Psoas muscle (tissue), 8 donors: ENCODE measurements at regions of chr1 and their contacts with region 1.

Region 1: DNA sequence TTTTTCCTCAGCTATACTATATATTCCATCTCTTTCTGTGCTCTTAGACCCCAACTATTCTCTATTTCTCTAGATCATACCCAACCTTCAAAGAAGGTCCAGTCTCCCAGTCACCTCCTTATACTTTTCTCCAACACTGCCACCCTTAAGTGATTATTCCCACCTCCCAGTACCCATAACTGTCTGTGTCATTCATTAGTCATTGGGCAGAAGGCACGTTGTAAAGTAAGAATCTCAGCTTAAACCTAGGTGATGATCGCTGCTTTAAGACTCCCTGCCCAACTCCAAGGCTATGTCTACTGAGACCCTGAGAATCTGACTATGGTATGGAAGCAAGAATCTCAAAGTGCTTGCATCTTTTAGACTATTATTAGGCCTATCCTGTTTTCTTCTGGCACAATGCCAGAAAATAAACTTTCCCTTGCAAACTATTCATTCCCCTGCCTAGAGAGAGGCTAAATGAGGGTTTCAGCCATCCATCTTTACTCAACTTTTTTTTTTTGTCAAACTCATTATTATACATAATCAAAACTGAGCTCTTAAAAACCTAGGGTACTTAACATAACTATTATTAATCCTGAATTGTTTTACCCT is 174.3 kb upstream of the DPT start:
- DNase-seq: no peak
- ATAC-seq: peak in 1 of 4 donors; percentile 23
- H3K4me3 ChIP-seq: no peak overlapping the region
- H3K27ac ChIP-seq: no peak overlapping the region
- H3K4me1 ChIP-seq: peaks cover 5% of the 10 kb centered on the region
- H3K27me3 ChIP-seq: no peaks in the 10 kb centered on the region
- CTCF ChIP-seq: no peak

Region 2: GRCh38 chr1:168728473-168729404 is 174.6 kb before region 1 on chr1 and contains the start of gene DPT:
- intact Hi-C with region 1: no loop called
- DNase-seq: peak; percentile 47 to 63
- ATAC-seq: peak; percentile 21 to 74 (median 57)
- H3K4me3 ChIP-seq: peak within 1 kb of the TSS; percentile 40
- H3K27ac ChIP-seq: peak within 1 kb of the TSS; percentile 33
- H3K4me1 ChIP-seq: peaks cover 9% of the 10 kb centered on the region
- H3K27me3 ChIP-seq: no peaks in the 10 kb centered on the region
- CTCF ChIP-seq: no peak
- total RNA-seq, gene DPT: 8.5 to 39.4 (median 10.8) TPM

Region 3: DNA sequence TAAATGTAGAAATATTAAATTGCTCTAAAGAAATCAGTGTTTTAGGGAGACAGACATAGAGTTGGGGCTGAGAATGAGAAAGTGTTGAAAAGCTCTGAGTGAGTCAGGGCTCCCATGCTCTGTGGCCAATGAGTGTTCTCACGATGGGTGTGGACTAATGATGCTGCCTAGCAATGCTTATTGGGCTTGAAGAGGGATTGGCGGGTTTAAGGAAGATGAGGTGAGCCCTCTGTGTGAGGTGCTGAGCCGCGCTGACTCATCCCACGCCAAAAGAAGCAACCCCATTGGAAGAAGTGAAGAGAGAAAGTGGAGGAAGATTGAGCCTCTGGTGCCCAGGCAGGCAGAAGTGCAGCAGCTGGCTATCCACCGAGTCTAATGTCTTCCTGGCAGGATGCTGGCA is 109.3 kb before region 1 on chr1:
- intact Hi-C with region 1: no loop called
- DNase-seq: no peak
- ATAC-seq: peak in 1 of 4 donors; percentile 71
- H3K4me3 ChIP-seq: no peak overlapping the region
- H3K27ac ChIP-seq: no peak overlapping the region
- H3K4me1 ChIP-seq: no peaks in the 10 kb centered on the region
- H3K27me3 ChIP-seq: no peaks in the 10 kb centered on the region
- CTCF ChIP-seq: no peak

Region 4: GRCh38 chr1:168824418-168824817 is 78.9 kb before region 1 on chr1:
- intact Hi-C with region 1: no loop called
- DNase-seq: no peak
- ATAC-seq: no peak
- H3K4me3 ChIP-seq: no peak overlapping the region
- H3K27ac ChIP-seq: no peak overlapping the region
- H3K4me1 ChIP-seq: no peaks in the 10 kb centered on the region
- H3K27me3 ChIP-seq: no peaks in the 10 kb centered on the region
- CTCF ChIP-seq: no peak

Region 5: GRCh38 chr1:168939548-168940245 is 36.4 kb after region 1 on chr1:
- intact Hi-C with region 1: loop called in 1 of 2 experiments (anchors 5 kb)
- DNase-seq: no peak
- ATAC-seq: peak in 2 of 4 donors; percentile 44 to 53
- H3K4me3 ChIP-seq: no peak overlapping the region
- H3K27ac ChIP-seq: no peak overlapping the region
- H3K4me1 ChIP-seq: no peaks in the 10 kb centered on the region
- H3K27me3 ChIP-seq: no peaks in the 10 kb centered on the region
- CTCF ChIP-seq: no peak

Region 6: DNA sequence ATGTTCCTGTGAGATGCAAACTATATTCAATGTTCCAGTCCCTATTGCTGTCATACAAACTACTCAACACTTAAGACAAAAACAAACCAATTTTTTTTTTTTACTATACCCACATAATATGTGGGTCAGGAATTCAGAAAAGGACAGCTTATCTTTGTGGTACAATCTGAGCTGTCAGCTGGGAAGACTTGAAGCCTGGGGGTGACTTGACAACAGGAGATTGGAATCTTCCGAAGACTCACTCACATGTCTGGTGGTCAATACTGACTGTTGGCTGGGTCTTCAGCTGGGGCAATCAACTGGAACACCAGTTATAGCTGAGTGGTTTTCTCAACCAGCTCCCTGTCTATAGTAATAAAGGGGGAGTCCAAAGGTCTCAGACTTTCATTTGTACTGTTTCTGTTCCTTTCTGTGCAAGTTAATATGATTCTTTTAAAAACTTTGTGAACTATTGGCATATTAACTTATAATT is 121.5 kb after region 1 on chr1:
- intact Hi-C with region 1: no loop called
- DNase-seq: no peak
- ATAC-seq: no peak
- H3K4me3 ChIP-seq: no peak overlapping the region
- H3K27ac ChIP-seq: no peak overlapping the region
- H3K4me1 ChIP-seq: no peaks in the 10 kb centered on the region
- H3K27me3 ChIP-seq: no peaks in the 10 kb centered on the region
- CTCF ChIP-seq: no peak